CD4-positive, alpha-beta T cell (primary cell): ENCODE measurements at regions of chr4 and their contacts with region 1.

Region 1: DNA sequence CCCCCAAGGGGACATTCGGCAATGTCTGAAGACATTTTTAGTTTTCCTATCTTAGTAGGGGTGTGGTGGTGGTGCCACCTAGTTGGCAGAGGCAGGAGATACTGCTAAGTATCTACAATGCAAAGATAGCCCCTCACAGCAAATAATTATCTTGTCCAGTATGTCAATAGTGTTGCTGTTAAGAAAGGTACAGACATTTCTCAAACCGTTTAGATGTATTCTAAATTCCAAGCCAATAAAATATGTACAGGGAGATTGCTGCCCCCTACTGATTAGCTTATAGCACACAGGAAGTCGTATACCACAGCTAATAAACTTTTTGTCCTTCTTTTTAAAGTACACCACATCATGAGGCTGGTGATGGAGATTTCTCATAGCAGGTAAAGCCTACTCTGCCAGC is 260.5 kb downstream of the TMA16 start:
- DNase-seq: peak in 3 of 14 experiments; percentile 51 to 57 (median 52)
- ATAC-seq: peak; percentile 61
- H3K4me3 ChIP-seq: no peak overlapping the region
- H3K4me3 Mint-ChIP-seq: no peak overlapping the region
- H3K27ac ChIP-seq: no peak overlapping the region
- H3K27ac Mint-ChIP-seq: no peak overlapping the region
- H3K4me1 ChIP-seq: no peaks in the 10 kb centered on the region
- H3K4me1 Mint-ChIP-seq: peaks cover 9% of the 10 kb centered on the region
- H3K27me3 ChIP-seq: no peaks in the 10 kb centered on the region
- H3K27me3 Mint-ChIP-seq: peaks cover 7% of the 10 kb centered on the region
- CTCF ChIP-seq: peak; percentile 62

Region 2: GRCh38 chr4:162497564-162498167 is 1257.3 kb before region 1 on chr4:
- CTCF ChIA-PET with region 1: no interaction called
- POLR2A ChIA-PET with region 1: no interaction called
- intact Hi-C with region 1: loop called in 1 of 2 experiments (anchors 10 kb)
- DNase-seq: peak in 3 of 14 experiments; percentile 38 to 54 (median 52)
- ATAC-seq: peak; percentile 52
- H3K4me3 ChIP-seq: no peak overlapping the region
- H3K4me3 Mint-ChIP-seq: no peak overlapping the region
- H3K27ac ChIP-seq: no peak overlapping the region
- H3K27ac Mint-ChIP-seq: no peak overlapping the region
- H3K4me1 ChIP-seq: no peaks in the 10 kb centered on the region
- H3K4me1 Mint-ChIP-seq: no peaks in the 10 kb centered on the region
- H3K27me3 ChIP-seq: no peaks in the 10 kb centered on the region
- H3K27me3 Mint-ChIP-seq: peaks cover 10% of the 10 kb centered on the region
- CTCF ChIP-seq: peak; percentile 72

Region 3: GRCh38 chr4:163484906-163485305 is 270.1 kb before region 1 on chr4:
- CTCF ChIA-PET with region 1: no interaction called
- POLR2A ChIA-PET with region 1: no interaction called
- intact Hi-C with region 1: loop called in 1 of 2 experiments (anchors 5 kb)
- DNase-seq: peak; percentile 14 to 77 (median 39)
- ATAC-seq: peak; percentile 60
- H3K4me3 ChIP-seq: no peak overlapping the region
- H3K4me3 Mint-ChIP-seq: no peak overlapping the region
- H3K27ac ChIP-seq: no peak overlapping the region
- H3K27ac Mint-ChIP-seq: no peak overlapping the region
- H3K4me1 ChIP-seq: no peaks in the 10 kb centered on the region
- H3K4me1 Mint-ChIP-seq: no peaks in the 10 kb centered on the region
- H3K27me3 ChIP-seq: no peaks in the 10 kb centered on the region
- H3K27me3 Mint-ChIP-seq: peaks cover 11% of the 10 kb centered on the region
- CTCF ChIP-seq: peak; percentile 71